ENCODE measurements at regions of chr12 and their contacts with region 1.

Region 1: GRCh38 chr12:116066381-116067230 is 210.9 kb downstream of the MED13L start:
- DNase-seq: peak in 1 of 2 donors; percentile 58
- ATAC-seq: peak; percentile 86

Region 2: DNA sequence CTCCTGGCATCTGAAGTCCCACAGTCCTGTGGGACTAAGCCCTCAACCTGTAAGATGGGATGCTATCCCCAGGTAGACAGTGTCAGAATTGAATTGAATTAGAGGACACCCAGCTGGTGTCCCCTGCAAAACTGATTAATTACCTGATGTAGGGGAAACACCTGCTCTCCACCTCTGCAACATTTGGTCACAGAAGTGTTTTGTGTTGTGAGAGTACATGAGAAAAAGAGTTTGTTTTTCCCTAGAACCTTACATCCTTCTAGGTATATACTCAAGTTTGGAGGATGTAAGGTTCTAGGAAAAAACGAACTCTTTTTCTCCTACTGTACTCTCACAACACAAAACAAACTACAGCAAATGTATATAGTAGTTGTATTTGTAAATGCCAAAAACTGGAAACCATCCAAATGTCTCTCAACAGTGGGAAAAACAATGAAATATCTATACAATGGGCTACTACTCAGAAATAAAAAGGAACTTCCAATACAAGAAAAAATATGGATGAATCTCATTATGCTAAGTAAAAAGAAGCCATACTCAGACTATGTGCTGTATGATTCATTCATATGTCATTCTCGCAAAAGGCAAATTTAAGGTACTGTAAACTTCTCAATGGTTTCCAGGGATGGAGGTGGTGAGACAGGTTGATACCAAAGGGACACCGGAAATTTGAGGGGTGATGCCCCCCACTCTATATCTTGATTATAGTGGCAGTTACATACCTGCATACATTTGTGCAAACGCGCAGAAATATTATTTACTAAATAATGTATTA is 50.2 kb after region 1 on chr12:
- intact Hi-C with region 1: loop called in 1 of 2 experiments (anchors 10 kb)
- DNase-seq: no peak
- ATAC-seq: no peak

Measured in left colon (tissue), 2 donors.